ENCODE measurements at regions of chr14 and their contacts with region 1.

Region 1: GRCh38 chr14:74762917-74763802 is at the start of gene YLPM1:
- DNase-seq: peak; percentile 95 to 97 (median 96)
- H3K4me3 ChIP-seq: peak within 1 kb of the TSS; percentile 77
- H3K4me3 Mint-ChIP-seq: peak within 1 kb of the TSS; percentile 87 to 99 (median 91)
- H3K27ac ChIP-seq: peak within 1 kb of the TSS; percentile 93
- H3K27ac Mint-ChIP-seq: peak within 1 kb of the TSS; percentile 92 to 98 (median 95)
- H3K4me1 ChIP-seq: peaks cover 50% of the 10 kb centered on the region
- H3K4me1 Mint-ChIP-seq: peaks cover 33 to 54% (median 44%) of the 10 kb centered on the region in 4 donors
- H3K27me3 ChIP-seq: no peaks in the 10 kb centered on the region
- H3K27me3 Mint-ChIP-seq: no peaks in the 10 kb centered on the region
- total RNA-seq, gene YLPM1: 83.1 to 90.3 TPM

Region 2: GRCh38 chr14:74302634-74303577 is 460.3 kb before region 1 on chr14 and contains the start of gene ABCD4:
- CTCF ChIA-PET with region 1: no interaction called
- POLR2A ChIA-PET with region 1: no interaction called
- intact Hi-C with region 1: loop called (anchors 2 kb)
- DNase-seq: peak; percentile 73 to 85 (median 76)
- H3K4me3 ChIP-seq: peak within 1 kb of the TSS; percentile 58 to 94
- H3K4me3 Mint-ChIP-seq: peak within 1 kb of the TSS; percentile 87 to 99 (median 98)
- H3K27ac ChIP-seq: peak within 1 kb of the TSS; percentile 65
- H3K27ac Mint-ChIP-seq: peak within 1 kb of the TSS; percentile 82 to 98 (median 94)
- H3K4me1 ChIP-seq: peaks cover 29% of the 10 kb centered on the region
- H3K4me1 Mint-ChIP-seq: peaks cover 26 to 51% (median 32%) of the 10 kb centered on the region in 4 donors
- H3K27me3 ChIP-seq: no peaks in the 10 kb centered on the region
- H3K27me3 Mint-ChIP-seq: no peaks in the 10 kb centered on the region
- total RNA-seq, gene ABCD4: 98.3 to 102 TPM

Region 3: DNA sequence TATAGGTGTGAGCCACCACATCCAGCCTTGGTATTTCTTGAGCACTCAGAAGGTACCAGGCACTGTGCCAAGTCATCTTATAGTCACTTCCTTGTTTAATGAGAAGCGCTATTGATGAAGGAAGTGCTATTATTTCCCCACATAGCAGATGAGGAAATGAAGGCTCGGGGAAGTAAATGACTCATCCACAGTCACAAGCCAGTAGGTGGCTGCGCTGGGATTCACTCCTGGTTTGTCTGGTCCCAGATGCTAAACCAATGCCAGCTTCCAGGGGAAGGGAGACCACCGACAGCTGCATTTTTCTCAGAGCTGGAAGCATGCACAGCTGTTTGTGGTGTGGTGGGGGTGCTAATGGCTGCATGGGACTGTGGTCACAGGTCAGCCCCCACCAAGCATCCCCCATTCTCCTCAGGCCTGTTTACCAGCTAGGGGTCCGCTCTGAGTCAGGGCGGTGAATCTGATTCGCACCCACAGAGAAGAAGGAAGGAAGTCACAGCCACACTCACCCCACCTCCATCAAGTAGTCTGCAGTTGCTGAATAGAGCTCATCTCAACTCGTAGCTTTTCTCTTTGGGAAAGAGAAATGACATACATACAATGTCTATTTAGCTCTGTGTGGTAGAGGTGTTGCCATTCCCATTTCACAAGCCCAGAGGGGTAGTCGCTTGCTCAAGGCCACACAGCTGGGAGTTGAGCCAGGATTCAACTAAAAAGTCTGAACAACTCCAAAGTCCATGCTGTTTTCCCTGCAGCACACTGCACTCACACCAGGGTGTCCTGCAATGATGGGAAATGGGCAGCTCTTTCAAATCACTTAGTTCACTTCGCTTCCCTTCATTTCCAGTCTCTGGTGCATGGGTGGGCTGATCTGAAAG is 144.8 kb before region 1 on chr14:
- CTCF ChIA-PET with region 1: interaction called, 19 read pairs
- POLR2A ChIA-PET with region 1: interaction called, 16 read pairs
- intact Hi-C with region 1: no loop called
- DNase-seq: peak; percentile 69 to 87 (median 70)
- H3K4me3 ChIP-seq: peak overlapping the region; percentile 31 to 51
- H3K4me3 Mint-ChIP-seq: peak overlapping the region; percentile 70 to 89 (median 82)
- H3K27ac ChIP-seq: peak overlapping the region; percentile 51
- H3K27ac Mint-ChIP-seq: peak overlapping the region; percentile 88 to 98 (median 93)
- H3K4me1 ChIP-seq: peaks cover 57% of the 10 kb centered on the region
- H3K4me1 Mint-ChIP-seq: peaks cover 41 to 79% (median 60%) of the 10 kb centered on the region in 4 donors
- H3K27me3 ChIP-seq: no peaks in the 10 kb centered on the region
- H3K27me3 Mint-ChIP-seq: peaks cover 4 to 5% of the 10 kb centered on the region in 2 donors

Region 4: GRCh38 chr14:74784634-74785033 is 21.5 kb after region 1 on chr14:
- CTCF ChIA-PET with region 1: interaction called, 4 read pairs
- POLR2A ChIA-PET with region 1: interaction called, 14 read pairs
- intact Hi-C with region 1: no loop called
- DNase-seq: no peak
- H3K4me3 ChIP-seq: no peak overlapping the region
- H3K4me3 Mint-ChIP-seq: peak overlapping the region in 1 of 8 donors; percentile 41
- H3K27ac ChIP-seq: no peak overlapping the region
- H3K27ac Mint-ChIP-seq: peak overlapping the region in 6 of 7 donors; percentile 8 to 82 (median 58)
- H3K4me1 ChIP-seq: peaks cover 6% of the 10 kb centered on the region
- H3K4me1 Mint-ChIP-seq: peaks cover 18 to 44% (median 27%) of the 10 kb centered on the region in 4 donors
- H3K27me3 ChIP-seq: no peaks in the 10 kb centered on the region
- H3K27me3 Mint-ChIP-seq: no peaks in the 10 kb centered on the region

Region 5: DNA sequence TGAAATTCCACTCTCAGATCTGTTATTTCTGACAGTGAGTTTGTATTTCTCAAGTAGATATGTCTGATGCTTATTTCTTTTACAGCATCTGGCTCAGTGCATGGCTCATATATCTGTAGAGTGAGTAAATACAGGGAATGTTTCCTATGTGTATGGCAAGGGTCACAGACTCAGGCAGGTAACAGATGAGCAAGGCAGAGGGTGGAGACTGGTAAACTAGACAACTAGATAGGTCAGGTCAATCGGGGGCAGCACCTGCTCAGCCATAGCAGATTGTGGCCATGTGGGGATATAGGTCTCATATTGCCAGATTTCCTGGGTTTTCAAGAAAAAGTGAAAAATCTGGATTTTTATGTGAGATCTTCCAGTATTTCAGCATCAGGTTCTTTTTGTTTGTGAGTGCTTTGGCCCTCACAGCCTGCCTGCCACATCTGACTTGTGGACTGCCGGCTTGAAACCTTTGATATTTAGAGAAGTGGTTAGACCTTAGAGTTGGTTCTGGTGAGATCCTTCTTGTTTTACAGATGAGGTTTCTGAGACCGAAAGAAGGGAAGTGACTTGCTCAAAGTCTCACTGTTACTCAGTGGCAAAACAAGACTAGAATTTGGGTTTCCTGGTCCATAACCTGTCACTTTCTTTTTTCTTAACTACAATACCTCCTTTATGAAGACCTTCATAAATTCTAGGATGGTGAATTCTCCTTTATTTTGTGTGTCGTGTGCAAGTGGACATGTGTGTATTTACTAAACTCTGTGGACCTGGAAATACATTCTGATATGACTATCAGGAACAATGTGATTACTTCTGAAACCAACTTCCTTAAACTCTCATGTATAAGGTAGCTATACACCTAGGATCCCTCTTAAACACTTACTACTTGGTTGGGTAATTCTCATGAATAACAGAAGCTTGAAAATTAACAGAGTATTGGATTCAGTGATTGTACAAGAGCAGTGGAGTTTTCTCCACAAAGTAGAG is 78.4 kb after region 1 on chr14:
- CTCF ChIA-PET with region 1: no interaction called
- POLR2A ChIA-PET with region 1: interaction called, 9 read pairs
- intact Hi-C with region 1: loop called (anchors 2 kb)
- DNase-seq: peak in 4 of 5 donors; percentile 16 to 31 (median 28)
- H3K4me3 ChIP-seq: peak overlapping the region in 1 of 2 donors; percentile 22
- H3K4me3 Mint-ChIP-seq: peak overlapping the region; percentile 35 to 73 (median 59)
- H3K27ac ChIP-seq: peak overlapping the region; percentile 14
- H3K27ac Mint-ChIP-seq: peak overlapping the region; percentile 85 to 96 (median 89)
- H3K4me1 ChIP-seq: peaks cover 59% of the 10 kb centered on the region
- H3K4me1 Mint-ChIP-seq: peaks cover 43 to 65% (median 53%) of the 10 kb centered on the region in 4 donors
- H3K27me3 ChIP-seq: no peaks in the 10 kb centered on the region
- H3K27me3 Mint-ChIP-seq: no peaks in the 10 kb centered on the region

Region 6: DNA sequence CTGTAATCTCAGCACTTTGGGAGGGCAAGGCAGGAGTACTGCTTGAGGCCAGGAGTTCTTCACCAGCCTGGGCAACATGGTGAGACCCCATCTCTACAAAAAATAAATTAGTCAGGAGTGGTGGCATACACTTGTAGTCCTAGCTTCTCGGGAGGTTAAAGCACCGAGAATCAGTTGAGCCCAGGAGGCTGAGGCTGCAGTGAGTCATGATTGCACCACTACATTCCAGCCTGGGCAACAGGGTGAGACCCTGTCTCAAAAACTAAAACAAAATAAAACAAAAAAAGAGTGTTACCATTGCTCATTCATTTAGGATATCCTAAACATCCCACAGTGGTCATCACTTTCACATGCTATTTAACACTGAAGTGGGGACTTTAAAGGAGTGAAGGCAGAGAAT is 355.9 kb after region 1 on chr14:
- CTCF ChIA-PET with region 1: no interaction called
- POLR2A ChIA-PET with region 1: no interaction called
- intact Hi-C with region 1: no loop called
- DNase-seq: no peak
- H3K4me3 ChIP-seq: no peak overlapping the region
- H3K4me3 Mint-ChIP-seq: no peak overlapping the region
- H3K27ac ChIP-seq: no peak overlapping the region
- H3K27ac Mint-ChIP-seq: no peak overlapping the region
- H3K4me1 ChIP-seq: peaks cover 12% of the 10 kb centered on the region
- H3K4me1 Mint-ChIP-seq: peaks cover 8 to 21% (median 15%) of the 10 kb centered on the region in 4 donors
- H3K27me3 ChIP-seq: no peaks in the 10 kb centered on the region
- H3K27me3 Mint-ChIP-seq: no peaks in the 10 kb centered on the region